ENCODE measurements at regions of chr16 and their contacts with region 1.

Region 1: GRCh38 chr16:85286970-85287824 is 174.9 kb upstream of the CIBAR2 start:
- DNase-seq: no peak
- ATAC-seq: no peak
- H3K4me3 ChIP-seq: no peak overlapping the region
- H3K27ac ChIP-seq: no peak overlapping the region
- H3K4me1 ChIP-seq: peaks cover 64% of the 10 kb centered on the region
- H3K27me3 ChIP-seq: no peaks in the 10 kb centered on the region; a peak in 1 of 5 replicates
- CTCF ChIP-seq: no peak
- EP300 ChIP-seq: no peak
- POLR2A ChIP-seq: no peak
- RAD21 ChIP-seq: no peak

Region 2: DNA sequence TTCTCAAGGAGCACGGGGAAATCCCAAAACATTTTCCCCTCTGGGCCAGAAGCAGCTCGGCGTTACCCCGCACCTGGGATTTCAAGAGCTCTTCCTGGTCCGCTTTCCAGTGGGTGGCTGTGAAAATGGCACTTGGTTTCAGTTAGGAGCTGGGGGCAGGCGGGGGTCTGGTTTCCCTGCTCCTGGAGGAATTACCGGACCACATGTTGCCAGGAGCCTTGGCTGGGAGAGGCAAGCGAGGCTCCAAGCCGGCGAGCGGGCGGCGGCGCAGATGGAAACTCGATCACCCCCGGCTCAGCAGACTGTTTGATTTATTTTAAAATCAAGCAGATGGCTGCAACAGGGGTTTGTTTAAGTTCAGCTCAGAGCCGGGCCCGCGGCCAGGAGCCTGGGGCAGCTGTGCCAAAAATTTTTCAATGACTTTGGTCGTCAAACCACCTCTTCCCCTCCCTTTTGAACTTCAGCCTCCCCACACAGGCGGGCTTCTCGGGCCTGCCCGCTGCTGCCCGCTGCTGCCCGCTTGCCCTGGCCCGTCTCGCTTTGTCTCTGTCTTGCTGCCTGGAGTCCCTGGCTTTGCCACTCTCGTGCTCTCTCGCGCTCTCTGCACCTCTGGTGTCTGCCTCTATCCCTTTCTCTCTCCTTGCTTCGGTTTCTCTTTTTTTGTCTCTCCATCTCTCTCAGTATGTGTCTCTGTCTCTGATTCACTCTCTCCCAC is 66.9 kb before region 1 on chr16:
- CTCF ChIA-PET with region 1: no interaction called
- POLR2A ChIA-PET with region 1: no interaction called
- in situ Hi-C with region 1: no loop called
- intact Hi-C with region 1: no loop called
- DNase-seq: peak; percentile 22
- ATAC-seq: peak; percentile 70
- H3K4me3 ChIP-seq: peak overlapping the region; percentile 18 to 48 (median 45); a peak in 5 of 6 replicates
- H3K27ac ChIP-seq: no peak overlapping the region
- H3K4me1 ChIP-seq: peaks cover 39% of the 10 kb centered on the region
- H3K27me3 ChIP-seq: peaks cover 0 to 2% of the 10 kb centered on the region in 2 experiments; a peak in 1 of 5 replicates
- CTCF ChIP-seq: peak; percentile 31; the same call in 1 of the 2 replicates
- EP300 ChIP-seq: no peak
- POLR2A ChIP-seq: no peak
- RAD21 ChIP-seq: peak; percentile 14; the same call in 1 of the 2 replicates

Region 3: DNA sequence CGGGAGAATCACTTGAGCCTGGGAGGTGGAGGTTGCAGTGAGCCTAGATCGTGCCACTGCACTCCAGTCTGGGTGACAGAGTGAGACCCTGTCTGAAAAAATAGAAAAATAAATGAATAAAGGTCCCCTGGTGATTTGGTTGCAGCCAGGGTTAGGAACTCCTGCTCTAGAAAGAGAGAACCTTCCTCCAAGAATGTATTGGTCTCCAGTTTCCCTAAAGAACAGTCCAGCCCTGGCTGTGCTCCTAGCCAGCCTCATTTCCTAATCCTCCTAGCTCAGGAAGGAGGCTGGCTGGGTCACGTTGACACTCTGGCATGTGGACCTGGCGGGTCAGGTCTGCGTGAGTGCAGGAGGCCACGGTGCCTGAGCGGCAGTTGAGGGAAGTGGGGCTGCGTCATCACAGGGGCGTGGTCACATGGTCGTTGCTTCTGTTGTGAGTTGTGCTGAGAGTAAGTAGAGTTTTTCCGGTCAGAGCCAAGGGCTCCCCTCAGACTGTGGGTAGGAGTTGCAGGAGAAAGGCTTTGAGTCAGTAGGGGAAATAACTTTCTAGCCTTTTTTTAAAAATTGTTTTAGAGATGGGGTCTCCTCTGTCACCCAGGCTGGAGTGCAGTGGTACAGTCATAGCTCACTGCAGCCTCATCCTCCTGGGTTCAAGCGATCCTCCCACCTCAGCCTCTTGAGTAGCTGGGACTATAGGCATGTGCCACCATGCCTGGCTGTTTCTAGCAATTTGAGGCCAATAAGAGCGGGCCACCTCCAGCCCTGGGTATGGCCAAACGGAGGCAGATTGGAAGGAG is 19.0 kb after region 1 on chr16:
- CTCF ChIA-PET with region 1: no interaction called
- POLR2A ChIA-PET with region 1: interaction called, 100 read pairs
- in situ Hi-C with region 1: no loop called
- intact Hi-C with region 1: loop called (anchors 1 kb)
- DNase-seq: peak; percentile 84
- ATAC-seq: peak; percentile 56
- H3K4me3 ChIP-seq: peak overlapping the region in 1 of 3 experiments; percentile 42; a peak in 1 of 6 replicates
- H3K27ac ChIP-seq: peak overlapping the region; percentile 72
- H3K4me1 ChIP-seq: peaks cover 75% of the 10 kb centered on the region
- H3K27me3 ChIP-seq: peaks cover 1 to 6% of the 10 kb centered on the region in 2 experiments; a peak in 1 of 5 replicates
- CTCF ChIP-seq: peak; percentile 38
- EP300 ChIP-seq: peak in 1 of 2 experiments; percentile 62; a peak in 1 of 4 replicates
- POLR2A ChIP-seq: peak in 1 of 2 experiments; percentile 25; a peak in 2 of 4 replicates
- RAD21 ChIP-seq: no peak

Region 4: DNA sequence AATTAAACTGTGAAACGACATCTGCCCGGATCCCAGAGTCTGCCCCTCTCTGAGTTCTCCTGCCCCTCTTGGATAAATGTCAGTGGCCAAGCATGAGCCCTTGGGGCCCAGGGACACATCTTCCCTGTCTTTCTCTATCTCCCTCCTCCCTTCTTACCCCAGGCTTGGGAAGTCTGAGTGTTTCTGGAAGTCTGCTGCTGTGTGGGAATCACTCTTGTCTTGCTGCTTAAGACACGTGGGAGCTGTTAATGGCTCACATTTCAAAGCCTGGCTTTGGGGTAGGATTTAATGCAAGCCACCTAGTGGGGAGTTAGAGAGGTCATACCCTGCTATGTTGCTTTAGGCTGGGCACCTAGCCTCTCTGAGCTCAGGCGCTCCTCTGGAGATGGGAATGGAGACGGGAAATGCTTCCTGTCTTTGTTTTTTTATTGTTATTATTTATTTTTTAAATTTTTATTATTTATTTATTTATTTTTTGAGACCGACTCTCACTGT is 43.5 kb after region 1 on chr16:
- CTCF ChIA-PET with region 1: no interaction called
- POLR2A ChIA-PET with region 1: no interaction called
- in situ Hi-C with region 1: no loop called
- intact Hi-C with region 1: loop called (anchors 5 kb)
- DNase-seq: peak; percentile 72
- ATAC-seq: peak; percentile 69
- H3K4me3 ChIP-seq: no peak overlapping the region
- H3K27ac ChIP-seq: no peak overlapping the region
- H3K4me1 ChIP-seq: peaks cover 45% of the 10 kb centered on the region
- H3K27me3 ChIP-seq: peaks cover 5 to 31% of the 10 kb centered on the region in 2 experiments
- CTCF ChIP-seq: peak; percentile 68
- EP300 ChIP-seq: no peak
- POLR2A ChIP-seq: no peak
- RAD21 ChIP-seq: peak; percentile 60